ENCODE measurements at regions of chr14 and their contacts with region 1.

Region 1: GRCh38 chr14:102568114-102568621 is 24.3 kb upstream of the RCOR1 start:
- DNase-seq: peak; percentile 87 to 95
- H3K4me3 ChIP-seq: peak overlapping the region; percentile 7; the same call in 1 of the 2 replicates
- H3K27ac ChIP-seq: peak overlapping the region; percentile 72
- H3K4me1 ChIP-seq: peaks cover 26% of the 10 kb centered on the region
- H3K27me3 ChIP-seq: no peaks in the 10 kb centered on the region
- CTCF ChIP-seq: no peak

Region 2: DNA sequence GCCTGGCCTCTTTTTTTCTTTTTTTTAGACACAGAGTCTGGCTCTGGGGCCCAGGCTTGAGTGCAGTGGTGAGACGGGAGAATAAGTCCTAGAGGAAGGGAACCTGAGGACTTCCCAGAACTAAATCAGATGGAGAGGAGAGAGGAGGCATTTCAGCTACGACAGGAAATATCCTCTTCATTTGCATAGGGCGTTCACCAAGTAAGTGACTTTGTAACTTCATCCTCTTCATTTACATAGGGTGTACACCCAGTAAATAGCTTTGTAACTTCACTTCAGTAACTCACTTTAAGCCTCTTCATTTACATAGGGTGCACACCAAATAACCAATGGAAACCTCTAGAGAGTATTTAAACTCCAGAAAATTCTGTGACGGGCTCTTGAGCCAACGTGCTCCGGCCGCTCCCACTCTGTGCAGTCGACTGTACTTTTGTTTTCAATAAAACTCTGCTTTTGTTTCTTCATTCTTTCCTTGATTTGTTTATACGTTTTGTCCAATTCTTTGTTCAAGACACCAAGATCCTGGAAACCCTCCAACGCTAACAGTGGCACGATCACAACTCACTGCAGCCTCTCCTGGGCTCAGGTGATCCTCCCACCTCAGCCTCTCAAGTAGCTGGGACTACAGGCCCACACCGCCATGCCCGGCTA is 37.2 kb before region 1 on chr14:
- CTCF ChIA-PET with region 1: interaction called, 5 read pairs
- POLR2A ChIA-PET with region 1: interaction called, 13 read pairs
- intact Hi-C with region 1: loop called (anchors 1 kb)
- DNase-seq: peak; percentile 28 to 55
- H3K4me3 ChIP-seq: no peak overlapping the region
- H3K27ac ChIP-seq: 0 out of 2 replicates have a peak overlapping the region, but pooled peaks have one; percentile 8
- H3K4me1 ChIP-seq: peaks cover 55% of the 10 kb centered on the region
- H3K27me3 ChIP-seq: no peaks in the 10 kb centered on the region
- CTCF ChIP-seq: no peak

Region 3: GRCh38 chr14:102555264-102555831 is 12.8 kb before region 1 on chr14:
- CTCF ChIA-PET with region 1: no interaction called
- POLR2A ChIA-PET with region 1: no interaction called
- intact Hi-C with region 1: loop called (anchors 2 kb)
- DNase-seq: no peak
- H3K4me3 ChIP-seq: no peak overlapping the region
- H3K27ac ChIP-seq: no peak overlapping the region
- H3K4me1 ChIP-seq: peaks cover 31% of the 10 kb centered on the region
- H3K27me3 ChIP-seq: no peaks in the 10 kb centered on the region
- CTCF ChIP-seq: no peak

Region 4: DNA sequence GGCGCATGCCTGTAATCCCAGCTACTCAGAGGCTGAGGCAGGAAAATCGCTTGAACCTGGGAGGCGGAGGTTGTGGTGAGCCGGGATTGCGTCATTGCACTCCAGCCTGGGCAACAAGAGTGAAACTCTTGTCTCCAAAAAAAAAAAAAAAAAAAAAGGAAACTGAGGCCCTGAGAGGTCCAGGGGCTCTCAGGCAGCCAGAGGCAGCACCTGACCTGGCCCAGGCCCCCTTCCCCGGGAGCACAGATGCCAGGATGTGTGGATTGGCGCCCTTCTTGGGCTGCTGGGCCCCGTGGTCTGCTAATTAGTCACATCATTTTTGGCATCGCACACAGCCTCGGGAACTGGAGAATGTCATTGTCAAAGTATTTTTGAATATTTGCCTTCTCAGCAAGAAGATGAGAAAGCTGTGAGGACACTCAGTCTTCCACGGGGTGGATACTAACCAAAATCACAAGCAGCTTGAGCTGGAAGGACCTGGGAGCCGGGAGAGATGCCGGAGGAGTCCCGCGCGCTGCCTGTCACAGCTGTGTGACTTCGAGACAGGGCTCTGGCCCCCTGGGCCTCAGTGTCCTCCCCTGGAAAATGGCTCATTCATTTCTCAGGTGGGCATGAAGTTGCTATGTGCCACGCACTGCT is 11.6 kb after region 1 on chr14:
- CTCF ChIA-PET with region 1: no interaction called
- POLR2A ChIA-PET with region 1: interaction called, 12 read pairs
- intact Hi-C with region 1: no loop called
- DNase-seq: peak; percentile 70 to 77
- H3K4me3 ChIP-seq: no peak overlapping the region
- H3K27ac ChIP-seq: peak overlapping the region; percentile 51
- H3K4me1 ChIP-seq: peaks cover 21% of the 10 kb centered on the region
- H3K27me3 ChIP-seq: no peaks in the 10 kb centered on the region
- CTCF ChIP-seq: no peak